B cell (primary cell): ENCODE measurements at regions of chr15 and their contacts with region 1.

Region 1: DNA sequence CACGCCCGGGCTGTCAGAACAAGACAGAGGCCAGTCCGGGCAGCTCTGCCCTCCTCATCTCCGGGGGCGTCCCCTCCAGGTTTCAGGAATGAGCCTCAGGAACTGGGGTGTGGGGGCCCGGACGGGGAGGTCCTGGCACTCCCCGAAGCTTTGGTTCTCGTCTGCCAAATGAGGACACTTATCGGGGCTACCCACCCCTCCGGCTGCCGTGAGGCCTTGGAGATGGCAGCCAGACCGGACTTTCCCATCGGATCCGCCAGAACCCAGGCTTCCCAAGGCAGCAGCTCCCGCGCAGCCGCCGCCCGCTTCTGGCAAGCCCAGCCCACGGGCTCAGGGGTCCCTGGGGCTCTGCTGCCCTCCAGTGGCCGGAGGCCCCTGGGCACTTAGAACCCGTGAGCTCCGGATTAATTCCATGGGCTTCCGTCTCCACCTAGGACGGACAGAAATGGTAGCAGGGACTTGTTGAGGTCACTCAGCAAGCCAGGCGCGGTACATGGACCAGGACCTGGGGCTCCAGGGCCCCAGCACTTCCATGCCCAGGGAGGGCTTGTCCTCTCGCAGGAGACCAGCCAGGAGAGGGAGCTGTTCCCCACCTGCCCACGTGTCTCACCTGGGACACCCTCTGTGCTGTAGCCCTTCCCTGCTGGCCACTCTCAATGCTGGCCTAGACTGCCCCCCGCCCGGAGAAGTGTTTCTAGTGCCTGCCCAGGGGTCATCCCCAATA is 89.4 kb downstream of the LINGO1 start:
- DNase-seq: peak; percentile 88
- ATAC-seq: peak; percentile 94
- H3K4me3 ChIP-seq: peak overlapping the region in 4 of 5 experiments; percentile 56 to 73 (median 62)
- H3K4me3 Mint-ChIP-seq: peak overlapping the region; percentile 80
- H3K27ac ChIP-seq: peak overlapping the region in 1 of 2 donors; percentile 67
- H3K27ac Mint-ChIP-seq: peak overlapping the region; percentile 61
- H3K4me1 ChIP-seq: peaks cover 22 to 39% of the 10 kb centered on the region in 2 donors
- H3K4me1 Mint-ChIP-seq: peaks cover 41% of the 10 kb centered on the region
- H3K27me3 ChIP-seq: peaks cover 0 to 2% (median 0%) of the 10 kb centered on the region in 4 experiments
- H3K27me3 Mint-ChIP-seq: no peaks in the 10 kb centered on the region
- CTCF ChIP-seq: peak; percentile 99

Region 2: GRCh38 chr15:77099741-77100463 is 443.4 kb before region 1 on chr15:
- CTCF ChIA-PET with region 1: interaction called, 92 read pairs
- POLR2A ChIA-PET with region 1: interaction called, 3 read pairs
- intact Hi-C with region 1: no loop called
- DNase-seq: peak; percentile 35
- ATAC-seq: peak; percentile 31
- H3K4me3 ChIP-seq: no peak overlapping the region
- H3K4me3 Mint-ChIP-seq: no peak overlapping the region
- H3K27ac ChIP-seq: no peak overlapping the region
- H3K27ac Mint-ChIP-seq: no peak overlapping the region
- H3K4me1 ChIP-seq: peaks cover 12 to 35% of the 10 kb centered on the region in 2 donors
- H3K4me1 Mint-ChIP-seq: peaks cover 14% of the 10 kb centered on the region
- H3K27me3 ChIP-seq: no peaks in the 10 kb centered on the region
- H3K27me3 Mint-ChIP-seq: no peaks in the 10 kb centered on the region
- CTCF ChIP-seq: no peak

Region 3: GRCh38 chr15:77118882-77119321 is 424.4 kb before region 1 on chr15:
- CTCF ChIA-PET with region 1: interaction called, 187 read pairs
- POLR2A ChIA-PET with region 1: no interaction called
- intact Hi-C with region 1: loop called (anchors 1 kb)
- DNase-seq: peak; percentile 76
- ATAC-seq: peak; percentile 54
- H3K4me3 ChIP-seq: no peak overlapping the region
- H3K4me3 Mint-ChIP-seq: no peak overlapping the region
- H3K27ac ChIP-seq: no peak overlapping the region
- H3K27ac Mint-ChIP-seq: no peak overlapping the region
- H3K4me1 ChIP-seq: peaks cover 24 to 31% of the 10 kb centered on the region in 2 donors
- H3K4me1 Mint-ChIP-seq: peaks cover 47% of the 10 kb centered on the region
- H3K27me3 ChIP-seq: no peaks in the 10 kb centered on the region
- H3K27me3 Mint-ChIP-seq: no peaks in the 10 kb centered on the region
- CTCF ChIP-seq: peak; percentile 77

Region 4: DNA sequence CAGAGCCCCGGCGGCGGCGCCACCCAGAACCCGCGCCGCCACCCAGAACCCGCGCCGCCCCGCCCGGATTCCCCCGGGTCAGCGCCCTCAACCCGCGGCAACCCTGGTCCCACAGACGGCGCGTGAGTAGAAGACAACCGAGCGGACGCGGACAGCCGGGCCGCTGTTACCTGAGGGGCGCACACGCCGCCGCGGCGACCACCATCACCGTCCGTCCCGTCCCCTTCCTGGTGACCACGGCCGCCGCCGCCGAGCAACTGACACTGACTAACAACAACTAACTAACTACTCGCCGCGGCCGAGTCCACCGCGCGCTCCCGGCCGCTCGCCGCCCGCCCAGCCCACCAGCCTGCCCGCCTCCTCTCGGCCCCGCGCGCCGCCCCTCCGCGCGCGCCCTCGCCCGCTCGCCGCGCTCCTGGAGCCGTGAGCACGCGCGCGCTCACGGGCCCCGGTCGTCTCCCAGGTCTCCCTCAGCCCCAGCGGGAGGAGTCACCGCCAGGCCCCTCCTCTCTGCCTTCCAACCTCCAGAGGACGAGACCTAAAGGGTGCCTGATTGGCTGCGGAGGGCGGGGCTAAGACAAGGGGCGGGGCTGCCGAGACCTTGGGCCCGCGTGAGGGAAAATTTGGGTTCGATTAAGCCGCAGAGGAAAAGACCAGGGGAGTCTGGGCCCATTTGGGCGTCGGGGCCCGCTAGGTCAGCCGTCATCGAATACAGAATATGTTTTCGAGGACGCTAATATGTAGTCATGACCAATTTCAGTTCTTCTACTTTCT is 123.3 kb before region 1 on chr15 and contains the start of gene PEAK1:
- CTCF ChIA-PET with region 1: interaction called, 6 read pairs
- POLR2A ChIA-PET with region 1: interaction called, 3 read pairs
- intact Hi-C with region 1: loop called (anchors 5 kb)
- DNase-seq: peak; percentile 100
- ATAC-seq: peak; percentile 95
- H3K4me3 ChIP-seq: peak within 1 kb of the TSS; percentile 64 to 97 (median 95)
- H3K4me3 Mint-ChIP-seq: peak within 1 kb of the TSS; percentile 99
- H3K27ac ChIP-seq: peak within 1 kb of the TSS; percentile 77 to 95
- H3K27ac Mint-ChIP-seq: peak within 1 kb of the TSS; percentile 98
- H3K4me1 ChIP-seq: peaks cover 16 to 17% of the 10 kb centered on the region in 2 donors
- H3K4me1 Mint-ChIP-seq: peaks cover 54% of the 10 kb centered on the region
- H3K27me3 ChIP-seq: no peaks in the 10 kb centered on the region
- H3K27me3 Mint-ChIP-seq: no peaks in the 10 kb centered on the region
- CTCF ChIP-seq: no peak
- total RNA-seq, gene PEAK1: 38.0 and 53.2 TPM in 2 replicates

Region 5: DNA sequence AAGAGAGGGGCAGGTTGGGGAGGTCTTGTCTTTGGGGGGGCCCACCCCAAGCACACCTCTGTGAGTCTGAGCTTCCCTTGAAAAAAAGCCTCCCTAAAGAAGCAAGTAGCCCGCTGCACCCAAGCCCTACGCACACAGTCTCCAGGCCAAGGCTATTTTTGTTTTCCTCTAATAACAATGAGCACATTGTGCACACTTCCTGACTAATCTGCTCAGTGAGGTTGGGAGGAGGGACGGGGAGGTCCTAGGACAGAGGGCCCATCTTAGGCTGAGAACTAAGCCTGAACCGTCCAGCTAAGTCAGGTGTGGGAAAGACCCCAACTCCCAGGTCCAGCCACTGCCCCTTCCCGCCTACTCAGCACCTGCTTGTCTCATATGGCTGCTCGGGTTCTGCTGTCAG is 35.4 kb before region 1 on chr15:
- CTCF ChIA-PET with region 1: interaction called, 20 read pairs
- POLR2A ChIA-PET with region 1: no interaction called
- intact Hi-C with region 1: no loop called
- DNase-seq: no peak
- ATAC-seq: no peak
- H3K4me3 ChIP-seq: no peak overlapping the region
- H3K4me3 Mint-ChIP-seq: no peak overlapping the region
- H3K27ac ChIP-seq: no peak overlapping the region
- H3K27ac Mint-ChIP-seq: no peak overlapping the region
- H3K4me1 ChIP-seq: peaks cover 24 to 26% of the 10 kb centered on the region in 2 donors
- H3K4me1 Mint-ChIP-seq: peaks cover 34% of the 10 kb centered on the region
- H3K27me3 ChIP-seq: no peaks in the 10 kb centered on the region
- H3K27me3 Mint-ChIP-seq: no peaks in the 10 kb centered on the region
- CTCF ChIP-seq: no peak

Region 6: DNA sequence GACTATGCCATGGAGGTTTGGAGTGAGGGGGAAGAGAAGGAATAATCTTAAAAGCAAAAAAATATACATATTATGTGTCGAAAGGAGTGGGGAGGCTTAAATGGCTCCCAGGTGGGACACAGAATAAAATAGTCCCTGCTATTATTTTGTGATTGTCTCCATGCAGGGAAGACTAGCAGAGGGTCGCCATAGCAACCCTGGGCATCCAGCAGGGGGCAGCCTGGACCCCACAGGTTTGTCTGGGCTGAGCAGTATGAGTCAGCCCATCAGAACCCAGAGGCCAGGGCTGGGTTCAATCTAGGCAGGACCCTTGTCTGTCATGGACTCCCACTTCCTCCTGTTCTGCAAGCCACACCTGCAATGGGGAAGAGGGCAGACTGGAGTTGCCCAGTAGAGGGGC is 106.9 kb after region 1 on chr15:
- CTCF ChIA-PET with region 1: no interaction called
- POLR2A ChIA-PET with region 1: no interaction called
- intact Hi-C with region 1: no loop called
- DNase-seq: no peak
- ATAC-seq: no peak
- H3K4me3 ChIP-seq: no peak overlapping the region
- H3K4me3 Mint-ChIP-seq: no peak overlapping the region
- H3K27ac ChIP-seq: no peak overlapping the region
- H3K27ac Mint-ChIP-seq: no peak overlapping the region
- H3K4me1 ChIP-seq: no peaks in the 10 kb centered on the region
- H3K4me1 Mint-ChIP-seq: no peaks in the 10 kb centered on the region
- H3K27me3 ChIP-seq: peaks cover 0 to 13% (median 2%) of the 10 kb centered on the region in 4 experiments
- H3K27me3 Mint-ChIP-seq: peaks cover 21% of the 10 kb centered on the region
- CTCF ChIP-seq: no peak